Prostate gland (tissue), 2 donors: ENCODE measurements at regions of chr16 and their contacts with region 1.

Region 1: GRCh38 chr16:46908540-46909372 is 24.6 kb downstream of the GPT2 start:
- DNase-seq: peak; percentile 40
- H3K4me3 ChIP-seq: no peak overlapping the region
- H3K27ac ChIP-seq: peak overlapping the region; percentile 39 to 71
- H3K4me1 ChIP-seq: peaks cover 5% of the 10 kb centered on the region
- H3K27me3 ChIP-seq: no peaks in the 10 kb centered on the region
- CTCF ChIP-seq: peak; percentile 63 to 95 (median 74)
- POLR2A ChIP-seq: no peak

Region 2: DNA sequence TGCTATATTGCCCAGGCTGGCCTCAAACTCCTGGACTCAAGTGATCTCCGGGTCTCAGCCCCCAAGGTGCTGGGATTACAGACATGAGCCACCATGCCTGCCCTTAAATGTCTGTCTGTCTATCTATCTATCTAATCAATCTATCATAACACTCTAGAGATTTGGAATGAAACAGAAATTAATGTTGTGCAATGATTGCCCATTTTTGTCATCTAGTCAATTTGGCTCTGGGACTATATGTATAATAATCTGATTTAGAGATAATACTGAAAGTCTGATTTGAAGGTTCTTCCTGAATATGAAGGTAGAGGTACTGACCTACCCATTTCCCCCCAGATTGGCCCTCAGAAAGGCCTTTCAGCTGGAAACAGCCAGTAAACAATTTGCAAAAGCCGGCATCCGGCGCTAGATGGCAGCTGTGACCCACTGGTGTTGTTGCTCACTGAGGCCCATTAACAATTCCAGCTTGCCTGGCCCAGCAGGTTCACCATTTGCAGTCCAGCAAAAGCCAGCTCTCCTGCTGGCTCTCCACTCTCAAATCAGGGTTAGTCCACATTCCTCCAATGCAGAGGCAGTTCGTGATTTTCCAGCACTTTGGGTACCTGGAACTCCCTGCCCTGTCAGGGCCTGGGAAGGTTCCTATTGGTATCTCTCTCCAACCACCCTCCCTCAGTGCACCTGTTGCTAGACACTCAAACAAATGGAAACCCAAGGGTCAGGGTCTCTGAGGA is 54.9 kb before region 1 on chr16:
- intact Hi-C with region 1: loop called (anchors 2 kb)
- DNase-seq: peak; percentile 80
- H3K4me3 ChIP-seq: no peak overlapping the region
- H3K27ac ChIP-seq: peak overlapping the region in 1 of 2 donors; percentile 44
- H3K4me1 ChIP-seq: no peaks in the 10 kb centered on the region
- H3K27me3 ChIP-seq: no peaks in the 10 kb centered on the region
- CTCF ChIP-seq: peak; percentile 51 to 91 (median 80)
- POLR2A ChIP-seq: no peak